ENCODE measurements at regions of chr5 and their contacts with region 1.

Region 1: GRCh38 chr5:169904059-169904458 is 76.2 kb downstream of the INSYN2B start:
- DNase-seq: no peak

Region 2: DNA sequence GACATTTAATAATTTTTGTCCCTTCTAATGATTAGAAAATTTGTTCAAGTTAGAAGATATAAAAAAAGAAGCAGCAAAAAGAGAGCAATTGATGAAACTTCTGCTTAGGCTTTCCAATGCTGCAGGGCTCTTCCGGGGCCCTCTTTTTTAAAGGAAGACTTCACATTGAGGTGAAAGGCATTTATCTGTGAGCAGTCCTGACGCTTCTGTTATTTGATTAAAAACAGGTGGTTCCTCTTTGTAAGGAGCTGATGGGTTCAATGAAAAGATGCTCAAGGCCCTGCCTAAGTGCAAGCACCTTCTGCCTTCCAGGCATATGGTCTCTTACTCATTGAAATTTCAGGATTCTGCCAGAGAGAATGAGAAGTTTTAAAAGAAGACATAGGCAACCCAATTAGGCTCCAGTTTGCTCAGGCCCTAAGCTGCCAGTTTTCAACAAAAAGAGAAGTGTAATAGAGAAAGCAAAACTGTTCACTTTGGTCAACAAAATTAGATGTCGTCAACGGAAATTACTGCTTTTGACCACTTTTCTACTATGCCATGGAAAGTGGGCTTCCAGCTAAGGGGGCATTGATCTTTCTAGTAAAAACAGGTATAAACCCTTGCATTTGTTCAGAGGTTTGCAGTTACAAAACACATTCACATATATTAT is 23.9 kb before region 1 on chr5:
- intact Hi-C with region 1: loop called in 1 of 2 experiments (anchors 1 kb)
- DNase-seq: no peak

Measured in posterior vena cava (tissue), 2 donors.